GM23248 (cell line): ENCODE measurements at regions of chr19 and their contacts with region 1.

Region 1: DNA sequence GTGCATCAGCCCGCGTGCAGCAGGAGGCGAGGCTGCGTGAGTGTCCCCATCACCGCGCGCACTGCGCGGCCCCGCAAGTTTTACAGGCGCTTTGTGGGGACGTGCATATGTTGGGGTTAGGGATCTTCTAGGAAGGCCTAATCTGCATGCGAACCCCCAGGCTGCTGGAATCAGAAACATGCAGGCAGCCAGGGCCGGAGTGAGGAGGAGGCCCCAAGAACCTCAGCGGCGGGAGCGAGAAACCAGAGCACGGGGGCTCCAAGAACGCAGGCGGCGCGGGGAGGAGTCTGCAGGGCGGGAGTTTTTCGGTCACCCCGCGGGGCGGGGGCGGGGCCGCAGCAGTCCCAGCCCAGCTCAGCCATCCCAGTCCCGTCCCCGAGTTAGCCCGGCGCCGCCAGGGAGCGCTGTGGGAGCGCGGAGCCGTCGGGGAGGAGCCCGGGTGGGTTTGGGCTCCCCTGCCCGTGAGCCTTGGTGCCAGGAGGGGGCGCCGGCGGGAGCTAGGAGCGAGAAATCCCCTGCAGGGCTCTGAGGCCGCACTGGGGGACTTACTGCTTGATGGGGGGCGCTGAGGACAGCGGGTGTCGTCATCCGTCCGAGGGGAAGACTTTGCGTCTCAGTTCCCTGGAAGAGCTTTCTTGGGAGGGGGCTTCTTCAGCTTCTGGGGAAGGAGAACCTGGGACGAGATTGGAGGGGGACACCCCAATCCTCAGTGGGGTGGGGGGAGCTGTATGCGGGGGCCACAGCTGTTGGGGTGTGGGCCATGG is 933 bp upstream of the NRTN start:
- DNase-seq: peak; percentile 89
- H3K4me3 ChIP-seq: peak overlapping the region; percentile 66
- H3K27ac ChIP-seq: no peak overlapping the region
- H3K4me1 ChIP-seq: no peaks in the 10 kb centered on the region
- H3K27me3 ChIP-seq: peaks cover 15% of the 10 kb centered on the region

Region 2: GRCh38 chr19:5607318-5608270 is 196.3 kb before region 1 on chr19:
- in situ Hi-C with region 1: no loop called
- DNase-seq: no peak
- H3K4me3 ChIP-seq: no peak overlapping the region
- H3K27ac ChIP-seq: no peak overlapping the region
- H3K4me1 ChIP-seq: no peaks in the 10 kb centered on the region
- H3K27me3 ChIP-seq: no peaks in the 10 kb centered on the region

Region 3: DNA sequence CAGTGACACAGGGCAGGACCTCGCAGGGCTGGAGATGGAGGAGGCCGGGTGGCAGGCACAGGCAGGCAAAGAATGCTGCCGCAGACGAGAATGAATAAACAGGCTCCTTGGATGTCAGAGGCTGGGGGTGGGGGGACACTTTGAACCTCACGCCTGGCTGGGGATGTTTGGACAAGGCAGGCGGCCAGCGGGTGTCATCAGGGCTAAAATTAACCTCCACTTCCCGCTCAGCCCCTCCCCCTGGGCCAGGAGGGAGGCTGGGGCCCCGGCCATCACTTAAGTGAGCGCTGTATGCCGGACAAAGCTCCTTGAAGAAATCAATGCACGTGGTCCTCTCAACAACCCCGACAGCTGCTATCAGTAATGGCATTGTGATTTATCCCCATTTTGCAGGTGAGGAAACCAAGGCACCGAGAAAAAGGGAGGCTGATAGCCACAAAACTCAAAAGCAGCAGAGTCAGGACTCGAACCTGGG is 76.7 kb after region 1 on chr19:
- in situ Hi-C with region 1: no loop called
- DNase-seq: peak; percentile 51
- H3K4me3 ChIP-seq: no peak overlapping the region
- H3K27ac ChIP-seq: no peak overlapping the region
- H3K4me1 ChIP-seq: peaks cover 3% of the 10 kb centered on the region; the same call in 1 of the 2 replicates
- H3K27me3 ChIP-seq: peaks cover 13% of the 10 kb centered on the region; the same call in 1 of the 2 replicates

Region 4: DNA sequence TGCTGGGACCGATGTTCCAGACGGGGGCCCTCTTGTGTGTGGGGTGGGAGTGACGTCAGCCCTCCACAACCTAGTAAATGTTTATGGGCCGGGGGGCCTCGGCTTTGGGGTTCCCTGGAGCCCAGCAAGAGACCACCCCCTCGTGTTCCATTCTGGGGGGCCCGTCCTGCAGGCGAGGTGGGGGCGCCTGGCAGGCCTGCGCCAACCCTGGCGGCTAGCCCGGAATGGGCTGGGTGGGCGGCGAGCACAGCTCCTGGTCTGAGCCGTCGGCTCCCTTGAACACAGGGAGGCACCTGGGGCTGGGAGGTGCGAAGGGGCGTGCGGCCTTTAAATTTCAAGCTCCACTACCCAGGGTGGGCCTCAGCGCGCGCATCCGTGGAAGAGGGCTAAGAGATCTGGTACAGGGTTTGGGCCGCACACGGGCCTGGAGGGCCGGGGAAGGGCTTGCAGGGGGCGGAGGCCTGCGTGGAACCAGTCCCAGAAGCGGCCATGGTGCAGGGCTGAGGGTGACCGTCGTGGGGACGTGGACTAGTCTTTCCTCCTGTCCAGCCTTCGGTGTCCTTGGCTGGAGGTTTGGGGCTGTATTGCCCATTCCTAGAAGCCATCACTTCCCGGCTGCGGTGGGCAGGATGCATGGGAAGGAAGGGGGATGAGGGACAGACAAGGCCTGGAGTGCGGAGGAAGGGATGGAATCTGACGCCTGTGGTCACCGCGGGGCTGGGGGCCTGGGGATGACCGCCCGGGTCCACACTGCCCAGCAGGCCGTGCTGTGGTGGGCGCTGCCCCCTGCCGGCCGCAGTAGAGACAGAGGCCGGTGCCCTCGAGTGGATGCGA is 88.2 kb after region 1 on chr19:
- in situ Hi-C with region 1: loop called (anchors 5 kb)
- DNase-seq: peak; percentile 67
- H3K4me3 ChIP-seq: no peak overlapping the region
- H3K27ac ChIP-seq: no peak overlapping the region
- H3K4me1 ChIP-seq: no peaks in the 10 kb centered on the region
- H3K27me3 ChIP-seq: no peaks in the 10 kb centered on the region